Activated naive CD4-positive, alpha-beta T cell treated with anti-CD3 and anti-CD28 coated beads for 36 hours (primary cell): ENCODE measurements at regions of chr9 and their contacts with region 1.

Region 1: GRCh38 chr9:3240656-3241268 is 285.0 kb downstream of the RFX3 start:
- DNase-seq: peak; percentile 85
- H3K4me3 Mint-ChIP-seq: no peak overlapping the region
- H3K27ac Mint-ChIP-seq: no peak overlapping the region
- H3K4me1 Mint-ChIP-seq: peaks cover 7% of the 10 kb centered on the region
- H3K27me3 Mint-ChIP-seq: no peaks in the 10 kb centered on the region

Region 2: DNA sequence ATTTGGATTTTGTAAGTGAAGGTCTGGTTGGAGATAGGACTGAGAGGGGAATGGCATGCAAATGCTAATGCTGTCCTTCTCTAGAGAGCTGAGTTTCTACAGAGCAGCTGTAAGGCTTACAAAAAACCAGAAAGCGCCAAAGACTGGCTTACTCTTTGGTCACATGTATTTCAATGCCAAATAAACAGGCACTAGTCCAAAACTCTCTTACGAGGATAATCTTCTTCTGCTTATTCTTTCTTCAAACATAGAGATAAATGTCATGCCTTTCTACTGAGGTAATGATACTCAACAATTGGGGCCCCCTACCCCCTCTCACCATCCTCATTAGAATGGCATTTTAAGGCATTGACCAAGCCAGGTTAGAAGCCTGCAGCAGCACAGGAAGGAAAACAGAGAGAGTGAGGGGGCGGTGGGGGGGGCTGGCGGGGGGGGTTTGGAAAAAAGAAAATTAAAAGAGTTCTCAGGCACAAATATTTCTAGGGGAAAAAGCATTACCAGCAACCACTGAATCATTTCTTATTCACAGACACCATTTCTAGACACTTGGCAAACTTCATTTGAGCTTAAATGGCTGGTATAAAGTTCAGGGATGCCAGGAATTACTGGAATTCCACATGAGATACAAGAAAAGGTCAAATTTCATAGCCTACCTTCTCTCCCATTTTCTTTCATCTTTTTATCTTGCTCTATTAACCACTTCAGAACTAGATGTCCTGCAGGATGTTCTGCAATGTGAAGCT is 430.9 kb before region 1 on chr9:
- CTCF ChIA-PET with region 1: no interaction called
- intact Hi-C with region 1: no loop called
- DNase-seq: no peak
- H3K4me3 Mint-ChIP-seq: no peak overlapping the region
- H3K27ac Mint-ChIP-seq: no peak overlapping the region
- H3K4me1 Mint-ChIP-seq: no peaks in the 10 kb centered on the region
- H3K27me3 Mint-ChIP-seq: no peaks in the 10 kb centered on the region

Region 3: DNA sequence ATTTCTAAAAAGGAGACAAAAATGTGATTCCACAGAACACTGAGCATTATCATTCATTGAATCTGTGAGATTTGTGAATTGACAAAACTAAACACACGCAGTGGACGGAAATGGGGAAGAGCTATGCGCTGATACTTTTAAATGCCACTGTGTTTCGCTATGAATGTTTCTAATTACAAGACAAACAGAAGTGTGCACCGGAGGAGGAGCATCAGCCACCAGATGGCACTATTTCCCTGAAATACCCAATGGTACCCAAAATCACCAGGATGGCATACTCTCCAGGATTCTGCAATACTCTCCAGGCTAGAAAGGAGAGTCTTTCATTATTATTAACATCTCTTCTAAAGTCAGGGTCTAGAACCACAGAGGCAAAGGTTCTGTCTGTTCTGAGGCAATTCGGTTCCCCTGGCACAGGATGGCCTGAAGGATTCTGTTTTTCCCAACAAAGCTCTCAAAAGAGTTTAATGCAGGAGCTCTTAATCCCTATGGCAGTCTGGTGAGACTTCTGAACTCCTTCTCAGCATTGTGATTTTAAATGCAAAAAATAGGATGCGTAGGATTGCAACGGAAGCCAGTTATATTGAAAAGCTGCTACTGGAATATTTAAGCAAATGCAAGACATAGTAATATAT is 383.1 kb before region 1 on chr9:
- CTCF ChIA-PET with region 1: interaction called, 7 read pairs
- intact Hi-C with region 1: loop called (anchors 5 kb)
- DNase-seq: peak; percentile 84
- H3K4me3 Mint-ChIP-seq: no peak overlapping the region
- H3K27ac Mint-ChIP-seq: no peak overlapping the region
- H3K4me1 Mint-ChIP-seq: peaks cover 6% of the 10 kb centered on the region
- H3K27me3 Mint-ChIP-seq: peaks cover 18% of the 10 kb centered on the region

Region 4: GRCh38 chr9:3441197-3441816 is 200.5 kb after region 1 on chr9:
- CTCF ChIA-PET with region 1: interaction called, 33 read pairs
- intact Hi-C with region 1: loop called (anchors 1 kb)
- DNase-seq: peak; percentile 76
- H3K4me3 Mint-ChIP-seq: no peak overlapping the region
- H3K27ac Mint-ChIP-seq: no peak overlapping the region
- H3K4me1 Mint-ChIP-seq: peaks cover 9% of the 10 kb centered on the region
- H3K27me3 Mint-ChIP-seq: no peaks in the 10 kb centered on the region

Region 5: DNA sequence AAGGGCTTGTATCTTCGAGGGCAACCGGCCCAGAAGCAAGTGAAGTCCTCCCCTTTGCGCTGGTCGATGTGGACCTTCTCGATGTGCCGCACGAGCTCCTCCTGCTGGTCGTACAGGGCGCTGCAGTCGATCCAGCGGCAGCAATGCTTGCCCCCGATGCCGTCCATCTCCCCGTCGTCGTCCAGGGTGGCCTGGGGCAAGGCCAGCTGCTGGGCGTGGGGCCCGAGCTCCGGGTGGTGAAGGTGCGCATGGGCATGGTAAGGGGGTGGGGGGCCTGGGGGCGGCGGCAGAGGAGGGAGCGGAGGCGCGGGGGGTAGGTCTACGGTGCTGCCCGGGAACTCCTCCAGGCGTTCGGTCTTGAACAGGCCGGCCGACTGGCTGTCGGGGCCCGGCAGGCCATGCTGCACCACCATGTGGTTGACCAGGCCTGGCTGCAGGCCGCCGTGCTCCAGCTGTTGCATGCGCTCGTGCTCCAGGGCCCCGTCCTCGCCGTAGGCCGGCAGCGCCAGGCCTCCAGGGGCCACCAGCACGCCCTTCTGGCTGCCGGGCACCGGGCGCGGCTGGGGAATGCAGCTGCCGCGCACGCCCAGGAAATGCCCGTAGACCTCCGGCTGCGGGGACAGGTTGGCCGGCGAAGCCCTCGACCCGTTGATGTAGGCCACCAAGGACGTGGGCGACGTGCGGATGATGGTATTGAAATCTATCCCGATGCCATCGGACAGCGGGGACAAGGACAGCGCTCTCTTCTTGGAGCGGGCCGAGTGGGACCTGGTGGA is 877.3 kb after region 1 on chr9:
- CTCF ChIA-PET with region 1: no interaction called
- intact Hi-C with region 1: loop called (anchors 2 kb)
- DNase-seq: peak; percentile 62
- H3K4me3 Mint-ChIP-seq: no peak overlapping the region
- H3K27ac Mint-ChIP-seq: no peak overlapping the region
- H3K4me1 Mint-ChIP-seq: no peaks in the 10 kb centered on the region
- H3K27me3 Mint-ChIP-seq: no peaks in the 10 kb centered on the region

Region 6: GRCh38 chr9:4339357-4339756 is 1098.6 kb after region 1 on chr9:
- CTCF ChIA-PET with region 1: no interaction called
- intact Hi-C with region 1: loop called (anchors 5 kb)
- DNase-seq: peak; percentile 96
- H3K4me3 Mint-ChIP-seq: peak overlapping the region; percentile 51
- H3K27ac Mint-ChIP-seq: peak overlapping the region; percentile 69
- H3K4me1 Mint-ChIP-seq: peaks cover 10% of the 10 kb centered on the region
- H3K27me3 Mint-ChIP-seq: no peaks in the 10 kb centered on the region